WTC11 (cell line): ENCODE measurements at regions of chr16 and their contacts with region 1.

Region 1: DNA sequence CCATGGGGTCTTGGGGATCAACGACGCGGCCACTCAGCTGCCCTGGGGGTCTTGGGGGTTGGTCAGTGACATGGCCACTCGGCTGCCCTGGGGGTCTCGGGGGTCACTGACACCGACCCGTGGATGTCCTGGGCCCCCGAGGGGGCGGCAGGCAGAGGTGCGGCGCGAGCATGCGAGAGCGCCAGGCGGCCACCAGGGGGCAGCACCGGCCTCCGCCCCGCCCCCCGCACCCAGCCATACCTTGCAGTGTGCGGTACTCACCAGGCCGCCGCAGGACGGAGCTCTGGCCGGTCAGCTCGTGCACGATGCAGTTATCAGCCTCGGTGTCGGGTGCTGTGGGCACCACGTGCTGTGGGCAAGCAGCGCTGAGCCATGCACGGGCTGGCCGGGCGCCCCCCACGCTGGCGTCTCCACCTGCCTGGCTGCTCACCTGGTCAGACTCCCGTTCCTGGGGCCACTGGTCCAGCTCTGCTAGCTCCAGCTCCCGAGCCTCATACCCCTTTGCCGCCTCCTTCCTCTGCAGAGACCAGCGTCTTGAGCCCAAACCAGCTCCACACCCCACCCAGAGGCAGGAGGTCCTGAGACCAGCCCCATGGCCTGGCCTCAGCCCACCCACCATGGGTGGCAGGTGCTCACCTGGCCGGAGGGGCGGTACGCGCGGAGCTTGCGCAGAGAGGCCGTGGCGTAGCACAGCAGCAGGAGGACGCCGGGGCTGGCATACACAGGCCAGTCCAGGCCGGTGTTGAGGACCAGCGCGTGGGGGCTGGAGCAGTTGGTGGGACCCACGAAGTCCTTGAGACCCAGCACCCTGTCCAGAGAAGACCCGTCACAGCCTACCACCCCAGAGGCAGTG is 31.2 kb downstream of the CTU2 start:
- DNase-seq: peak; percentile 81
- ATAC-seq: peak; percentile 86
- H3K4me3 Mint-ChIP-seq: no peak overlapping the region
- H3K27ac Mint-ChIP-seq: no peak overlapping the region
- H3K4me1 Mint-ChIP-seq: no peaks in the 10 kb centered on the region
- H3K27me3 Mint-ChIP-seq: no peaks in the 10 kb centered on the region
- CTCF ChIP-seq: peak; percentile 99

Region 2: DNA sequence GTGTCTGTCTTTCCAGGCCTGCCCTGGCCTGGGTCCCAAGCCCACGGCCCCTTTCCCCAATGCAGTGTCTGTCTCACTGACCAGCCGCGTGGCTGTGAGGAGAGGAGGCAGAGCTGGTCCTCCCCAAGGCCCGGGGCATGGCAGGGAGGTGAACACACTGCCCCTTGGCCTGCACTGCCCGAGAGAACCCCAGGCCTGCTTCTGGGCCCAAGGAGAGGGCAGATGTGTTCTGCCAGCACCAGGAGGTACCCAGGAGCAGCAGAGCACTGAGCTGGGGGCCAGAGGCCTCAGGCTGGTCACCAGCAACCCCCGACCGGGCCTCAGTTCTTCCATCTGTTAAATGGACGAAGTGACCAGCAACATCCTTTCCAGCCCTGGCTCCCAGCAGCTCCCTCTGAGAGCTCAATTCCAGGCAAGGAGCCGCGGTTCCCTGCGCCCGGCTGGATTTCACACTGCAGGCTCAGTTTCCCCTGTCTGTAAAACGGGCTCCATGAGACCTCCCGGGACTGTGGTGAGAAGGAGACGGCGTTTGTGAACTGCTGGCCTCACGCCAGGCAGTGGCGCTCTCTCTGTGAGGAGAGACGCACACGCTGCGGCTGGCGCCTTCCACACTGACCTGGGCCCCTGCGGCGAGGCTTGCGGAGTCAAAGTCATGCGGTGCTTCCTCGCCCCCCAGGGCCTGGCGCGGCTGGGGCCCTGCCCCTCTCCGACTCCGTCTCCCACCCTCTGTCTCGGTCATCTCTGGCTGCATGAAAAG is 292.5 kb before region 1 on chr16:
- CTCF ChIA-PET with region 1: no interaction called
- POLR2A ChIA-PET with region 1: no interaction called
- DNase-seq: no peak
- ATAC-seq: no peak
- H3K4me3 Mint-ChIP-seq: no peak overlapping the region
- H3K27ac Mint-ChIP-seq: no peak overlapping the region
- H3K4me1 Mint-ChIP-seq: no peaks in the 10 kb centered on the region
- H3K27me3 Mint-ChIP-seq: peaks cover 3% of the 10 kb centered on the region; the same call in 1 of the 2 replicates
- CTCF ChIP-seq: no peak

Region 3: DNA sequence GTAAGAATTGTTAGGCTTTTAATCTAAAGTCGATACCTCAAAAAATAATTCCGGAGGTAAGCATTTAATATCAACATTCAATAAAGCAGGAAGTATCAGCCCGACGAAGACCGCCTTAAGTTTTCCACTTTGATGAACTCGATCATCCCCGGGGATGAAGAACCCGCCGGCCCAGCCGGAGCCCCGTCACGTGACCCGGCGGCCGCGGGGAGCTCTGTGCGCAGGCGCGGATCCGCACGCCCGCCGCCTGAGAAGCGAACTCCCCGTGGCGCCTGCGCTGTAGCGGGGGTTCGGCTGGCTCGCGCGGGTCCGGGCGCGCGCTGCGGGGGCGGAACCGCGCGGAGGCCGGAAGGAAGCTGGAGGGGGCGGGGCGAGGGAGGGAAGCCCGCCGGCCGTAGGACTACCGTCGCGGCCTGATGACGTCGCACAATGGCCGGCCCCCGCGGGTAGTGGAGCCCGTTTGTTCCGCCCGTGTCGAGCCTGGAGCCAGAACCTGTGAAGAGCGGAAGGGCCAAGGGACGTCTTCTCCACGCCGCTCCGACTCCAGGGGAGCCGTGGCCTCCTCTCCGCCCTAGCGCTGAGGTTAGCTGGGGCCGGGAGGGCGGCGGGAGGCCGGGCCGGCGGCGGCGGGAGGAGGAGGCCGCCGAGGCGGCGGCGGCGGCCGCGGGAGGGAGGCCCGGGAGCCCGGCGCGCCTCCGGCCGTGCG is 167.4 kb before region 1 on chr16 and contains the start of gene ZC3H18:
- CTCF ChIA-PET with region 1: interaction called, 11 read pairs
- POLR2A ChIA-PET with region 1: no interaction called
- DNase-seq: peak; percentile 93
- ATAC-seq: peak; percentile 94
- H3K4me3 Mint-ChIP-seq: peak within 1 kb of the TSS; percentile 88
- H3K27ac Mint-ChIP-seq: peak within 1 kb of the TSS; percentile 55
- H3K4me1 Mint-ChIP-seq: peaks cover 15% of the 10 kb centered on the region
- H3K27me3 Mint-ChIP-seq: no peaks in the 10 kb centered on the region
- CTCF ChIP-seq: no peak
- total RNA-seq, gene ZC3H18: 57.3 to 65.6 TPM (median 61.8 TPM) in 3 replicates

Region 4: DNA sequence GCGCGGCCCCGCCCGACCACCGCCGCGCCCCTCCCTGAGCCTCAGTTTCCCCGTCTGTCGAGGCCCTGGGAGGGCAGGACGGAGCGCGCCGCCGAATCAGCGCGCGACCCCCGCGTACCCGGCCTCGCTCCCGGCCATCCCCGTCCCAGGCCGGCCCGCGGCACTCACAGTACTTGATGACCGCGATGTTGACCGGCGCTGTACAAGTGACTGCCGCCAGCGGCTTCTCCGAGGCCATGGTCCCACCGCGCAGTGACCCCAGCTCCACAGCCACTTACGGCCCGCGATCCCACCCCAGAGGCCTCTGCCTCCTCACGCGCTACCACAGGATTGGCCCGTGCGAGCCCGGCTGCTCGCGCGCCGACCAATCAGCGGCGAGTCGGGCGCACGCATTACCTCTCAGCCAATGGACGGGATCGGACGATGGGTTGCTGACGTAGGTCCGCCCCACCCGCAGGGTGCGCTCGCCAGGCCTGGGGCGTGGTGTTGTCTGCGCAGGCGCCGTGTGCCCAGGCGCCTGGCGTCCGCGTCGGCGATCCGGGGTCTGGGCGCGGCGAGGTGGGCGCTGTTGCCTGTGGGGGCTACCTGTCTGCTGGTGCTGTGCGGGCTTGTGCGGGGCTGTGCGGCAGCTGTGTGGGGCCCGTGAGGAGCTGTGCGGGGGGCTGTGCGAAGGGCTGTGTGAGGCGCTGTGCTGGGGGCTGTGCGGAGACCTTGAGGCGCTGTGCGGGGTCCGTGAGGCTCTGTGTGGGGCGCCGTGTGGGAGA is 74.5 kb before region 1 on chr16 and contains the start of gene MVD:
- CTCF ChIA-PET with region 1: interaction called, 18 read pairs
- POLR2A ChIA-PET with region 1: no interaction called
- DNase-seq: peak; percentile 98
- ATAC-seq: peak; percentile 97
- H3K4me3 Mint-ChIP-seq: peak within 1 kb of the TSS; percentile 83
- H3K27ac Mint-ChIP-seq: peak within 1 kb of the TSS; percentile 93
- H3K4me1 Mint-ChIP-seq: peaks cover 19% of the 10 kb centered on the region
- H3K27me3 Mint-ChIP-seq: no peaks in the 10 kb centered on the region; the same call in 1 of the 2 replicates
- CTCF ChIP-seq: no peak
- total RNA-seq, gene MVD: 96.9 to 113 TPM (median 109 TPM) in 3 replicates

Region 5: GRCh38 chr16:88700636-88701482 is 36.7 kb before region 1 on chr16:
- CTCF ChIA-PET with region 1: interaction called, 46 read pairs
- POLR2A ChIA-PET with region 1: no interaction called
- DNase-seq: no peak
- ATAC-seq: no peak
- H3K4me3 Mint-ChIP-seq: no peak overlapping the region
- H3K27ac Mint-ChIP-seq: no peak overlapping the region
- H3K4me1 Mint-ChIP-seq: peaks cover 10% of the 10 kb centered on the region
- H3K27me3 Mint-ChIP-seq: no peaks in the 10 kb centered on the region
- CTCF ChIP-seq: no peak

Region 6: GRCh38 chr16:88754912-88755744 is 17.6 kb after region 1 on chr16:
- CTCF ChIA-PET with region 1: interaction called, 185 read pairs
- POLR2A ChIA-PET with region 1: no interaction called
- DNase-seq: peak; percentile 72
- ATAC-seq: peak; percentile 78
- H3K4me3 Mint-ChIP-seq: no peak overlapping the region
- H3K27ac Mint-ChIP-seq: peak overlapping the region; percentile 85; the same call in 1 of the 2 replicates
- H3K4me1 Mint-ChIP-seq: peaks cover 18% of the 10 kb centered on the region
- H3K27me3 Mint-ChIP-seq: no peaks in the 10 kb centered on the region
- CTCF ChIP-seq: no peak

Region 7: GRCh38 chr16:88796278-88796677 is 58.8 kb after region 1 on chr16:
- CTCF ChIA-PET with region 1: interaction called, 31 read pairs
- POLR2A ChIA-PET with region 1: no interaction called
- DNase-seq: no peak
- ATAC-seq: no peak
- H3K4me3 Mint-ChIP-seq: no peak overlapping the region
- H3K27ac Mint-ChIP-seq: no peak overlapping the region
- H3K4me1 Mint-ChIP-seq: peaks cover 13% of the 10 kb centered on the region; the same call in 1 of the 2 replicates
- H3K27me3 Mint-ChIP-seq: no peaks in the 10 kb centered on the region
- CTCF ChIP-seq: no peak

Region 8: GRCh38 chr16:88881007-88881615 is 143.6 kb after region 1 on chr16:
- CTCF ChIA-PET with region 1: interaction called, 16 read pairs
- POLR2A ChIA-PET with region 1: no interaction called
- DNase-seq: peak; percentile 41
- ATAC-seq: peak; percentile 51
- H3K4me3 Mint-ChIP-seq: no peak overlapping the region
- H3K27ac Mint-ChIP-seq: no peak overlapping the region
- H3K4me1 Mint-ChIP-seq: no peaks in the 10 kb centered on the region
- H3K27me3 Mint-ChIP-seq: no peaks in the 10 kb centered on the region; the same call in 1 of the 2 replicates
- CTCF ChIP-seq: no peak

Region 9: DNA sequence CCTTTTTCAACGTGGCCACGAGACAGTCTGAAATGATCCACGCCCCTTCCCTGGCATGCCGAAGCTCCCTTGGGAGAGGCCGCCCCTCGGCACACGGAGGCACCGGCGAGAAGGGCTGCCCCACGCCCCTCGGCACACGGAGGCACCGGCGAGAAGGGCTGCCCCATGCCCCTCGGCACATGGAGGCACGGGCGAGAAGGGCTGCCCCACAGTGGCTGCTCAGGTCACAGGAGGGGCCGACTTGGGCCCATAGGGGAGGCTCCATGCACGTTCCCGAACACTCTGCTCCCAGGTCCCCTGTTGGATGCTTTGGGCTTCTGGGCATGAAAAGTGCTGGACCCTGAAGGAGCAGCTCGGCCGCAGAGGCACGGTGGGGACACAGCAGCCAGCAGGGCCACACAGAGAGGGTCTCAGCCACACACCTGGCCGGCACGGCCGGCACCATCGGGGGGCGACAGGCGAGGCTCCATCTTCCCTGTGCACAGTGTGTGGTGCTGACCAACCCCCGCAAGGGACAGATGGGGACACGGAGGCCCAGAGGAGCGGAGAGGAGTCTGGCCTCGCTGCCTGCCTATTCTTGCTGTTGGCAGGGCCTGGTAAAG is 196.6 kb after region 1 on chr16:
- CTCF ChIA-PET with region 1: no interaction called
- POLR2A ChIA-PET with region 1: no interaction called
- DNase-seq: no peak
- ATAC-seq: peak; percentile 50
- H3K4me3 Mint-ChIP-seq: no peak overlapping the region
- H3K27ac Mint-ChIP-seq: no peak overlapping the region
- H3K4me1 Mint-ChIP-seq: no peaks in the 10 kb centered on the region
- H3K27me3 Mint-ChIP-seq: peaks cover 7% of the 10 kb centered on the region
- CTCF ChIP-seq: no peak